Right cardiac atrium (tissue), 5 donors: ENCODE measurements at regions of chr19 and their contacts with region 1.

Region 1: DNA sequence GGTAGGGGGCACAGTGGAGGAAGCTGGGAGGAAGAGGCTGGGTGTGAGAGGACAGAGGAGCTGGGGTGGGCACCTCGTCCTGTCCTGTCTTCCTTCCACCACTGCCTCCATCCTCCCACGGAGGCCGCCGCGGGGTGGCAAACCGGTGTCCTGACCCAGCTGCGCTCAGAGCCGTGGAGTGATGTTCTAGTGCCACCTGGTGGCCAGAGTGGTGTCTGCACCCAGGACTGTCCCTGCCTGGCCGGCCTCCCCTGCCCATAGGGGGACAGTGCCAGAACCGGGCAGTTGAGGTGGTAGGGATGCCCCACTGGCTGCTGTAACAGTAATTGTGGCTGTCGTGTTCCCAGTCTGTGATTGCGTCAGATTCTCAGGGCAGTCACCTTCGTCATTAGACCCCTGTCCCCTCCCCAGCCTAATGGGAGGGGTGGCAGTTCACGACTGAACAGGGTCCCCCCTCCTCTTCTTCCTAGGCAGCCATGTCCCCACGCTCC is 11.1 kb upstream of the ARRDC2 start:
- DNase-seq: peak; percentile 86 to 95 (median 94)
- ATAC-seq: peak; percentile 74 to 76
- H3K4me3 ChIP-seq: no peak overlapping the region
- H3K27ac ChIP-seq: no peak overlapping the region
- H3K4me1 ChIP-seq: no peaks in the 10 kb centered on the region
- H3K27me3 ChIP-seq: no peaks in the 10 kb centered on the region

Region 2: DNA sequence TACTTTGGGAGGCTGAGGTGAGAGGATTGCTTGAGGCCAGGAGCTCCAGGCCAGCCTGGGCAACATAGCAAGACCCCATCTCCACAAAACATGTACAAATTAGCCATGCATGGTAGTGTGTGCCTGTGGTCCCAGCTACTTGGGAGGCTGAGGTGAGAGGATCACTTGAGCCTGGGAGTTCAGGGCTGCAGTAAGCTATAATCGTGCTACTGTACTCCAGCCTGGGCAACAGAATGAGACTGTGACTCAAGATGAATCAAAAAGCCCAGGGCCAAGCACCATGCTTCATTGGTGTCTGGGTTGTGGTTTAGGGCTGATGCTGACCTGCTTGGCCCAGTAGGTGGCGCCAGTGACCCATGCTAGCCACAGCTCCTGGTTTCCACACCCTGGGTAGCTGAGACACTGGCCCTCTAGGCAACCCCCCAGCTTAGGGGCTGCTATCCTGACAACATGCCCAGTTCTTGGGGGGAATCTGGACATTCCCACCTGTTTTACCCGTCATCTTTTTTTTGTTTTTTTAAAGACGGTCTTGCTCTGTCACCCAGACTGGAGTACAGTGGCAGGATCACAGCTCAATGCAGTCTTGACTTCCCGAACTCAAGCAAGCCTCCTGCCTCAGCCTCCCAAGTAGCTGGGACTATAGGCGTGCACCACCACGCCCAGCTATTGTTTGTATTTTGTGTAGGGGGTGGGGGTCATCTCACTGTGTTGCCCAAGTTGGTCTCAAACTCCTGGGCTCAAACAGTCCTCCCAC is 58.6 kb before region 1 on chr19:
- intact Hi-C with region 1: loop called (anchors 1 to 5 kb)
- DNase-seq: peak; percentile 75 to 91 (median 89)
- ATAC-seq: peak; percentile 79 to 85
- H3K4me3 ChIP-seq: no peak overlapping the region
- H3K27ac ChIP-seq: no peak overlapping the region
- H3K4me1 ChIP-seq: peaks cover 5% of the 10 kb centered on the region
- H3K27me3 ChIP-seq: no peaks in the 10 kb centered on the region